CD8-positive, alpha-beta T cell (primary cell): ENCODE measurements at regions of chr2 and their contacts with region 1.

Region 1: DNA sequence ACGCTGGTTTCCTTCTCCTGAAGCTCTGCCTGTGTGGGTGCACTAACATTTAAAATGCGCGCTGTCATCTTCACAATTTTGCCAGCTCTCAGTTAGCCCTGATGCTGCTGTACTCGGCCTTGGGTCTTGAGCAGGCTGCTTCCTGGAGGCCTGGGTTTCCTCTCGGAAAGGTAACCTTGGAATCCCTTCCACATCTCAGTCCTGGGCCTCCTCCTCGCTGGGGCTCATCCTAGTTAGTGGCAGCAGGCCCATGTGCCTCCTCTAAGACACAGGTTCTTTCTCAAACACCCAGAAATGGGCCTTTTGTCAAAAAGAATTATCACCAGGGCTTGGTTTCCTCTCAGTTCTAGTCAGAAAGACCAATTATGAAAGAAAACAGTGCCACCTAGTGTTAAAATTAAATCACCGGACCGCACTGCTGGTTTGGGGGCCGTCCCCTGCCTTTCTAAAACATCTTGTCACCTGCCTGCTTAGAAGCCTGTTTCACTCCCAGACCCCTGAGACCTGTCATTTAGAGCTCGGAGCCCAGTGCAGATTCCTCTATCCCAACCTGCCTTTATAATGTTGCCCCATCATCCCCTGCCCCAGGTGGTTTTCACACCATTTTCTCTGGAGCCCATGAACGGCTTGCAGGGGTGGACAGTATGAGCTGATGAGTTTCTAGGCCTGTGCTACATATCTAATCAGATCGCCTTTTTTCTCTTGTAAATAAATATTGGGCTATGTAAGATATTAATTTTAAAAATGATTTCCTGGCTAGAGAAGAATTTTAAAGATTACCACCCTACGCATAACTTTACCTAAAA is 42.4 kb downstream of the HK2 start:
- DNase-seq: peak in 8 of 9 experiments; percentile 5 to 73 (median 42)
- ATAC-seq: peak; percentile 77
- H3K4me3 ChIP-seq: no peak overlapping the region
- H3K4me3 Mint-ChIP-seq: no peak overlapping the region
- H3K27ac ChIP-seq: no peak overlapping the region
- H3K27ac Mint-ChIP-seq: no peak overlapping the region
- H3K4me1 ChIP-seq: peaks cover 3% of the 10 kb centered on the region
- H3K4me1 Mint-ChIP-seq: peaks cover 4% of the 10 kb centered on the region
- H3K27me3 ChIP-seq: no peaks in the 10 kb centered on the region
- H3K27me3 Mint-ChIP-seq: no peaks in the 10 kb centered on the region
- CTCF ChIP-seq: peak; percentile 75

Region 2: GRCh38 chr2:74699251-74699650 is 177.0 kb before region 1 on chr2:
- CTCF ChIA-PET with region 1: interaction called, 11 read pairs
- POLR2A ChIA-PET with region 1: no interaction called
- intact Hi-C with region 1: no loop called
- DNase-seq: no peak
- ATAC-seq: no peak
- H3K4me3 ChIP-seq: no peak overlapping the region
- H3K4me3 Mint-ChIP-seq: no peak overlapping the region
- H3K27ac ChIP-seq: no peak overlapping the region
- H3K27ac Mint-ChIP-seq: no peak overlapping the region
- H3K4me1 ChIP-seq: no peaks in the 10 kb centered on the region
- H3K4me1 Mint-ChIP-seq: no peaks in the 10 kb centered on the region
- H3K27me3 ChIP-seq: no peaks in the 10 kb centered on the region
- H3K27me3 Mint-ChIP-seq: no peaks in the 10 kb centered on the region
- CTCF ChIP-seq: no peak

Region 3: DNA sequence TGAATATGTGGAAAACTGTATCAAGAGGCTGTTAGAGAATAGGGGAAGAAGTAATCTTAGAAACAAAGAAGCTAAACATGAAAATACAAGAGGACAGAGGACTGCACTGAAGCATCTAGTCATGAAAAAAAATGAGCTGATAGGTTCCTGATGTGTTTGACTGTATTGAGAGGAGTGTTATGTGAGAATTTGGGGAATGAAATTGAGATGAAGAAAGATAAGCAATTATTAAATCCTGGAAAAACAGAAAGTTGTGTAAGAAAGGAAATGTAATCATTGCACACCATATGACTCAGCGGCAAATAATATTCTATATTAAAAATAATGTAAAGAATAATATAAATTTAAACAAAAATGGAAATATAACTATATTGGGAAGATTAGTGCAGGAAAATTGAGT is 151.0 kb before region 1 on chr2:
- CTCF ChIA-PET with region 1: interaction called, 10 read pairs
- POLR2A ChIA-PET with region 1: no interaction called
- intact Hi-C with region 1: no loop called
- DNase-seq: no peak
- ATAC-seq: no peak
- H3K4me3 ChIP-seq: no peak overlapping the region
- H3K4me3 Mint-ChIP-seq: no peak overlapping the region
- H3K27ac ChIP-seq: no peak overlapping the region
- H3K27ac Mint-ChIP-seq: no peak overlapping the region
- H3K4me1 ChIP-seq: no peaks in the 10 kb centered on the region
- H3K4me1 Mint-ChIP-seq: no peaks in the 10 kb centered on the region
- H3K27me3 ChIP-seq: no peaks in the 10 kb centered on the region
- H3K27me3 Mint-ChIP-seq: peaks cover 16% of the 10 kb centered on the region
- CTCF ChIP-seq: no peak

Region 4: GRCh38 chr2:74833418-74834233 is 42.7 kb before region 1 on chr2 and contains the start of gene HK2:
- CTCF ChIA-PET with region 1: interaction called, 78 read pairs
- POLR2A ChIA-PET with region 1: interaction called, 3 read pairs
- intact Hi-C with region 1: loop called (anchors 1 to 2 kb)
- DNase-seq: peak; percentile 54 to 89 (median 78)
- ATAC-seq: peak; percentile 83
- H3K4me3 ChIP-seq: peak within 1 kb of the TSS; percentile 58 to 76
- H3K4me3 Mint-ChIP-seq: peak within 1 kb of the TSS; percentile 89
- H3K27ac ChIP-seq: peak within 1 kb of the TSS in 1 of 2 experiments; percentile 53
- H3K27ac Mint-ChIP-seq: peak within 1 kb of the TSS; percentile 85
- H3K4me1 ChIP-seq: peaks cover 25% of the 10 kb centered on the region
- H3K4me1 Mint-ChIP-seq: peaks cover 35% of the 10 kb centered on the region
- H3K27me3 ChIP-seq: peaks cover 0 to 3% of the 10 kb centered on the region in 2 experiments
- H3K27me3 Mint-ChIP-seq: no peaks in the 10 kb centered on the region
- CTCF ChIP-seq: no peak
- total RNA-seq, gene HK2: 6.5 to 8.9 TPM

Region 5: DNA sequence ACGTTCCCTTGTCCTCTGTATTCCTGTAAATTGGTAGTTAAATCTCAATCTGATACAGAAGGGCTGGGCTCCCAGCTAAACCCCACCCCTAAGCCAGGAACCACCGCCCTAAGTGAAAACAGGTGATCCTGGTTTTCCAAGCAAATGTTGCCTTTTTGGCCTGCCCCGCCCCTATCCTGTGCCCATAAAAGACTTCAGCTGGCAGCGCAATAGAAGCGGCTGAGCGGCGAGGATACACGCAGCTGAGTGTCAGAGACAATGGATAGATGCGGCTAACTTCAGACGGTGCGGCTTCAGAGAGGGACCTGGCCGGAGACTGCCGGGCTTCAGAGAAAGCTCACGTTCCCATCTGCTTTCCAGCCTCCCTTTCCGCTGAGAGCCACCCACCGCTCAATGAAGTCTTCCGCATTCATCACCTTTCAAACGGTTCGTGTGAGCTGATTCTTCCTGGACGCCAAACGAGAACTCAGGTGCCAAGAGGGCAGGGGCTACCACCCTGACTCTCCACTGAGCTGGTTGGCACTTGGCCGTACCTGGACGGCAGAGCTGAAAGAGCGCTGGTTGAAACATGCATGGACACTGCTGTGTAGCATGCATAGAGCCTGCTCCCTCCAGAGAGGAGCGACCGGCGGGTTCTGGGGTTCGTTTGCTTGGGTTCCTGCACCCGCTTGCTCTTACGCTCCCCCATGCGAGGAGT is 32.6 kb after region 1 on chr2:
- CTCF ChIA-PET with region 1: no interaction called
- POLR2A ChIA-PET with region 1: no interaction called
- intact Hi-C with region 1: no loop called
- DNase-seq: no peak
- ATAC-seq: no peak
- H3K4me3 ChIP-seq: no peak overlapping the region
- H3K4me3 Mint-ChIP-seq: no peak overlapping the region
- H3K27ac ChIP-seq: no peak overlapping the region
- H3K27ac Mint-ChIP-seq: no peak overlapping the region
- H3K4me1 ChIP-seq: no peaks in the 10 kb centered on the region
- H3K4me1 Mint-ChIP-seq: peaks cover 7% of the 10 kb centered on the region
- H3K27me3 ChIP-seq: peaks cover 3 to 4% of the 10 kb centered on the region in 2 experiments
- H3K27me3 Mint-ChIP-seq: peaks cover 55% of the 10 kb centered on the region
- CTCF ChIP-seq: no peak

Region 6: DNA sequence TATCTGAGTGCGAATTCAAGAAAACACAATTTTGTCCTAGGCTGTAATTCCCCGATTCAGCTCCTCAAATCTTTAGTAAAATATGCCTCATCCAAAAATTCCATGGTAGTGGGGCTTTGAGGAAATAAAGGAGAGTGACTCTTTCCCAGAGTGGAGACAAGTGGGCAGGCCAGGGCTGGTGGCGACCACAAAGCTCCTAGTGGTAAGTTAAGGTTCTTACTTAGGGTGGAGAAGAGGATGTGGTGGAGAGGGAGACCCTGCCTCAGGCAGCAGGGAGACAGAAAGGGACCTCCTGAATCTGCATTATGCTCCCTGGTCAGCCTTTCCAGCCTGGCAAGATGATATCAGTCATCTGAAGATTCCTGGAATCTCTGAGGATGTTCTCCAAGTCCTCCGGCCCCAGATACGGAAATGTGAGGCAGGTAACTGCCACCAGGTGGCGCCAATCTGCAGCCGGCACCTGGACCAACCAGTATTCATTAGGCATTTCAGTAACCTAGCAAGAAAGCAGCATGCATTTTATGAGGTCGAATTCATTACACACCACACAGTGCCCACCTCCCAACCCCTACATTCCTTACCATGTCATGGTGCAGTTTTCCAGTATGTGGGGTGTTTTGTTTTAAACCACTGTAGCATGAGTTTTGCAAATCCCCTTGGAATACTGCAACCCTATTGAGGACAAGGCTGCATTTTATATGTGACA is 188.6 kb after region 1 on chr2:
- CTCF ChIA-PET with region 1: no interaction called
- POLR2A ChIA-PET with region 1: no interaction called
- intact Hi-C with region 1: no loop called
- DNase-seq: peak; percentile 18 to 63 (median 43)
- ATAC-seq: no peak
- H3K4me3 ChIP-seq: no peak overlapping the region
- H3K4me3 Mint-ChIP-seq: no peak overlapping the region
- H3K27ac ChIP-seq: no peak overlapping the region
- H3K27ac Mint-ChIP-seq: no peak overlapping the region
- H3K4me1 ChIP-seq: no peaks in the 10 kb centered on the region
- H3K4me1 Mint-ChIP-seq: no peaks in the 10 kb centered on the region
- H3K27me3 ChIP-seq: no peaks in the 10 kb centered on the region
- H3K27me3 Mint-ChIP-seq: peaks cover 2% of the 10 kb centered on the region
- CTCF ChIP-seq: peak; percentile 67